Gastrocnemius medialis (tissue), 4 donors: ENCODE measurements at regions of chr5 and their contacts with region 1.

Region 1: DNA sequence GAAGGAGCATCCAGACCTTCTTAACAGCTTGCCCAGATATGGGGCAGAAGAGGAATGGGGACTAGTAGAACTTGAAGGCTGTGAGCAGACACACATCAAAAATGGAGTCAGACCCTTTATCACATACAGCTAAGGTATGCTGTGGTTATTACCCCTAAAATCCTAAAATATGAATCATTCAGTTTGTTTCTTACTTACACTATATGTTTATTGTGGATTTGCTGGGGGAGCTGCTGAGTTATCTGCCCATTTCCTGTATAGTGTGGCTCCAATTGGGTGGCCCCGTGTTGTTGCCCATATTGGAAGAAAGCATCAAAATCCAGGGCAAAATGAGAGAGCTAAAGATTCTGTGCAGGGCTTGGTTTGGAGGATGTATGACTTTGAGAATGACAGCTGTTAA is 56.9 kb downstream of the AP3S1 start:
- DNase-seq: no peak
- ATAC-seq: no peak
- H3K4me3 ChIP-seq: no peak overlapping the region
- H3K27ac ChIP-seq: no peak overlapping the region
- H3K4me1 ChIP-seq: no peaks in the 10 kb centered on the region
- H3K27me3 ChIP-seq: no peaks in the 10 kb centered on the region
- CTCF ChIP-seq: no peak
- POLR2A ChIP-seq: no peak

Region 2: DNA sequence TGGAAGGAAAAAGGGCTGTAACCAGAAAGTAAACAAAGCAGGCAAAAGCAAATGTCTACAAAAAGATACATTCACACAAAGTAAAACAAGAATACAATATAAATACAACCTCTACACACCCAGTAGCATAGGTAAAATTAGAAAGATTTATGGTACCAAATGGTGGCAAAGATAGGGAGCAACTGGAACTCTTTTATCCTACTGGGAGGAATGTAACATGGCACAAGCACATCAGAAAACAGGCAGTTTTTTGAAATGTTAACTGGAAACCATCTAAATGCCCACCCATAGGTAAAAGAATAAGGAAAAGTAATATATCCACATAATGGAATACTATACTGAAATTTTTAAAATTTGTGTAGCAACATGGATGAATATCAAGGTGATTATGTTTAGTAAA is 125.0 kb after region 1 on chr5:
- in situ Hi-C with region 1: no loop called
- intact Hi-C with region 1: loop called (anchors 10 kb)
- DNase-seq: no peak
- ATAC-seq: no peak
- H3K4me3 ChIP-seq: no peak overlapping the region
- H3K27ac ChIP-seq: no peak overlapping the region
- H3K4me1 ChIP-seq: no peaks in the 10 kb centered on the region
- H3K27me3 ChIP-seq: no peaks in the 10 kb centered on the region
- CTCF ChIP-seq: no peak
- POLR2A ChIP-seq: no peak